CD8-positive, alpha-beta T cell (primary cell): ENCODE measurements at regions of chr7 and their contacts with region 1.

Region 1: DNA sequence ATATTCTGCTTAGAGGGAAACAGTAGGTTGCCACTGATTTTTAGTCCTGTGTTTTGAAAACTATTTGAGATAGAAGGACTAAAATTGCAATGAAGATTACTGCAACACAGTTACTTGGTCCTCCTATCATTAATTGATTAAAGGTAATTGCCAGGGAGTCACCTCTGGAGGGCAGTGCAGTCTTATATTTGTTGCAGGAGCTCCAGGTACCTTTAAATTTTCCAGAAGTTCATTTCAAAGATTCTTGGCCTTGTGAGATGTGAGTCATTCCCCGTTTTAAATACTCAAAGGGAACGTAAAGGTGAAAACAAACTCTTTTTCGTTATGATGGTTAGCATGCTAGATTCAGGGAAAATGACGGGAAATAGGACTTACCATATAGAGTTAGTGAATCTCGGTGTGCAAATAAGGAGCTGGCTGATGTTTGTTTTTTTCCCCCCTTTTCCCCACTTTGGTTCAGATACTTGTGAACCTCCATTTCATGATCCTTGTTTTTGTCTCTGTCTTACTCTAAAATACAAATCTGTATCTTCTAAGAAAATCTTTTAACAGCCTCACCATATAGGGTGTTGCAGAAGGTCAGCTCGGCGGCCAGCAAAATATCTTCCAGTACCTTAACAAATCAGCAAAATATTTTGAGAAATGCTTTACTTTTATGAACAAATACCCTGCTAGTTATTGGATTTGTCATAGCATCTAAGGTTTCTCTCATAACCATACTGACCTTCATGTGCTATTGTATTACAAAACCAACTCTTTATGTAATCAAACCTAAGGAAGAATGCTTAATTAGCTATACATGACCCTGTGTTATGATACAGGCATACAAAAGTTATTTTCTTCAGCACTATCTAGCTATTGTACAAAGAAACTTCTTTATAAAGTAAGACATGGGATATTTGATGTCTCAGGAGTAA is 143.0 kb upstream of the HDAC9 start:
- DNase-seq: peak in 3 of 9 experiments; percentile 4 to 51 (median 37)
- ATAC-seq: no peak
- H3K4me3 ChIP-seq: no peak overlapping the region
- H3K4me3 Mint-ChIP-seq: no peak overlapping the region
- H3K27ac ChIP-seq: no peak overlapping the region
- H3K27ac Mint-ChIP-seq: no peak overlapping the region
- H3K4me1 ChIP-seq: no peaks in the 10 kb centered on the region
- H3K4me1 Mint-ChIP-seq: peaks cover 8% of the 10 kb centered on the region
- H3K27me3 ChIP-seq: no peaks in the 10 kb centered on the region
- H3K27me3 Mint-ChIP-seq: no peaks in the 10 kb centered on the region
- CTCF ChIP-seq: no peak

Region 2: GRCh38 chr7:16982640-16983350 is 1369.8 kb before region 1 on chr7:
- CTCF ChIA-PET with region 1: no interaction called
- POLR2A ChIA-PET with region 1: no interaction called
- intact Hi-C with region 1: loop called (anchors 10 kb)
- DNase-seq: peak in 4 of 9 experiments; percentile 6 to 65 (median 36)
- ATAC-seq: peak; percentile 69
- H3K4me3 ChIP-seq: no peak overlapping the region
- H3K4me3 Mint-ChIP-seq: no peak overlapping the region
- H3K27ac ChIP-seq: no peak overlapping the region
- H3K27ac Mint-ChIP-seq: no peak overlapping the region
- H3K4me1 ChIP-seq: no peaks in the 10 kb centered on the region
- H3K4me1 Mint-ChIP-seq: peaks cover 2% of the 10 kb centered on the region
- H3K27me3 ChIP-seq: peaks cover 0 to 2% of the 10 kb centered on the region in 2 experiments
- H3K27me3 Mint-ChIP-seq: peaks cover 11% of the 10 kb centered on the region
- CTCF ChIP-seq: peak; percentile 99

Region 3: DNA sequence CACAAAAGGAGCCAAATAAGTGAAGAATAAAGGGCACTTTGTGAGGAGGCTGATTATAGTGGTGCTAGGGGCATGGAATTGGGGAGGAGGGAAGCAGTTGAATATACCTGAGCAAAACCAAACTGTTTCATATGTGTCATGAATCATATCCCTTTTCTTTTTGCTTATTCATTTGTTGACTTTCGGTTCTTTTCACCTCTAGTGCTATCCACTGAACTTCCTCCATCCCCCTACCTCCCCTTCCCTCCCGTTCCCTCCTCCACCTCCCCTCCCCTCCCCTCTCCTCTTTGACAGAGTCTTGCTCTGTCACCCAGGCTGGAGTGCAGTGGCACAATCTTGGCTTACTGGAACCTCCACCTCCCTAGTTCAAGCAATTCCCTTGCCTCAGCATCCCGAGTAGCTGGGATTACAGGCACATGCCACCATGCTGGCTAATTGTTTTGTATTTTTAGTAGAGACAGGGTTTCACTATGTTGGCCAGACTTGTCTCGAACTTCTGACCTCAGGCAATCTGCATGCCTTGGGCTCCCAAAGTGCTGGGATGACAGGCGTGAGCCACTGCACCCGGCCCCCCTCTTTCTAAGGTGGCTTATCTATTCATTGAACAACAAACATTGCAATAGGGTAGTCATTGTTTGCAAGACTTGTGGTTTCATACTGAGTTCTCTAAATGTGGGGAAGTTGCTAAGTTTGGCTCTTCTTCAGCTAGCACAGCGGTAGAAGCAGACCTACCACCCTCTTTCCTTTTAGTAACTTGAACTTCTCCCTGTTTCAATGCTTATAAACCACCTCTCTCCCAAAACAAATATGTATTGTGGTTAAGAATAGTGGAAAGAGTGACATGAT is 174.6 kb before region 1 on chr7:
- CTCF ChIA-PET with region 1: no interaction called
- POLR2A ChIA-PET with region 1: no interaction called
- intact Hi-C with region 1: no loop called
- DNase-seq: peak in 2 of 9 experiments; percentile 15 to 41
- ATAC-seq: peak; percentile 29
- H3K4me3 ChIP-seq: no peak overlapping the region
- H3K4me3 Mint-ChIP-seq: no peak overlapping the region
- H3K27ac ChIP-seq: no peak overlapping the region
- H3K27ac Mint-ChIP-seq: no peak overlapping the region
- H3K4me1 ChIP-seq: no peaks in the 10 kb centered on the region
- H3K4me1 Mint-ChIP-seq: no peaks in the 10 kb centered on the region
- H3K27me3 ChIP-seq: no peaks in the 10 kb centered on the region
- H3K27me3 Mint-ChIP-seq: peaks cover 5% of the 10 kb centered on the region
- CTCF ChIP-seq: no peak

Region 4: GRCh38 chr7:18570890-18571478 is 218.4 kb after region 1 on chr7:
- CTCF ChIA-PET with region 1: no interaction called
- POLR2A ChIA-PET with region 1: no interaction called
- intact Hi-C with region 1: no loop called
- DNase-seq: no peak
- ATAC-seq: no peak
- H3K4me3 ChIP-seq: no peak overlapping the region
- H3K4me3 Mint-ChIP-seq: no peak overlapping the region
- H3K27ac ChIP-seq: no peak overlapping the region
- H3K27ac Mint-ChIP-seq: no peak overlapping the region
- H3K4me1 ChIP-seq: no peaks in the 10 kb centered on the region
- H3K4me1 Mint-ChIP-seq: no peaks in the 10 kb centered on the region
- H3K27me3 ChIP-seq: no peaks in the 10 kb centered on the region
- H3K27me3 Mint-ChIP-seq: no peaks in the 10 kb centered on the region
- CTCF ChIP-seq: no peak

Region 5: DNA sequence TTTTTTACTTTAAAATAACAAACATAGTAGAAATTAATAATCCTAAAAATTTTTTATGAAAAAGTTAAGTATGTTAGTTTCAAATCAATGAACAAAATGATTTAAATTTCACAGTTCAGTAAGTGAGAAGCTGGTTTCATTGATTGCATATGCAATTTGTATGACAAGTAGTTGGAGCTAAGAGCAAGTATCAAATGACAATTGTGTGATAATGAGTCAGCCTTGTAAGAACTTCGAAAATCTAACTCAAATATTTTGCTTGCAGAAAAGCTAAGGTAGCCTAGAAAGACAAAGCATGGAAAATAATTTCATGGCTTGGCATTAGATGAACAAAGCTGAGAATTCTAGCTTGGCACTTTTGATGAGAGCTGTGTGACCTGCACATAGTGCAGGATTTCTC is 254.4 kb after region 1 on chr7:
- CTCF ChIA-PET with region 1: no interaction called
- POLR2A ChIA-PET with region 1: no interaction called
- intact Hi-C with region 1: no loop called
- DNase-seq: no peak
- ATAC-seq: no peak
- H3K4me3 ChIP-seq: no peak overlapping the region
- H3K4me3 Mint-ChIP-seq: no peak overlapping the region
- H3K27ac ChIP-seq: no peak overlapping the region
- H3K27ac Mint-ChIP-seq: no peak overlapping the region
- H3K4me1 ChIP-seq: no peaks in the 10 kb centered on the region
- H3K4me1 Mint-ChIP-seq: no peaks in the 10 kb centered on the region
- H3K27me3 ChIP-seq: no peaks in the 10 kb centered on the region
- H3K27me3 Mint-ChIP-seq: no peaks in the 10 kb centered on the region
- CTCF ChIP-seq: no peak

Region 6: DNA sequence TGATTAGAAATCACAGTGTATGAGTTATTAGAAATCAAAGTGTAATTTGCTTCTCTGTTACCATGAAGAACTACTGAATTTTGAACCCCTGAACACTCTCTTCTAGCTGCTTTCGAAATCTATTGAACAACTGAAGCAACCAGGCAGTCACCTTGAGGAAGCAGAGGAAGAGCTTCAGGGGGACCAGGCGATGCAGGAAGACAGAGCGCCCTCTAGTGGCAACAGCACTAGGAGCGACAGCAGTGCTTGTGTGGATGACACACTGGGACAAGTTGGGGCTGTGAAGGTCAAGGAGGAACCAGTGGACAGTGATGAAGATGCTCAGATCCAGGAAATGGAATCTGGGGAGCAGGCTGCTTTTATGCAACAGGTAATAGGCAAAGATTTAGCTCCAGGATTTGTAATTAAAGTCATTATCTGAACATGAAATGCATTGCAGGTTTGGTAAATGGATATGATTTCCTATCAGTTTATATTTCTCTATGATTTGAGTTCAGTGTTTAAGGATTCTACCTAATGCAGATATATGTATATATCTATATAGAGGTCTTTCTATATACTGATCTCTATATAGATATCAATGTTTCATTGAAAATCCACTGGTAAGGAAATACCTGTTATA is 313.6 kb after region 1 on chr7:
- CTCF ChIA-PET with region 1: interaction called, 3 read pairs
- POLR2A ChIA-PET with region 1: no interaction called
- intact Hi-C with region 1: loop called (anchors 5 to 10 kb)
- DNase-seq: peak; percentile 13 to 76 (median 59)
- ATAC-seq: peak; percentile 46
- H3K4me3 ChIP-seq: no peak overlapping the region
- H3K4me3 Mint-ChIP-seq: no peak overlapping the region
- H3K27ac ChIP-seq: no peak overlapping the region
- H3K27ac Mint-ChIP-seq: no peak overlapping the region
- H3K4me1 ChIP-seq: no peaks in the 10 kb centered on the region
- H3K4me1 Mint-ChIP-seq: peaks cover 3% of the 10 kb centered on the region
- H3K27me3 ChIP-seq: no peaks in the 10 kb centered on the region
- H3K27me3 Mint-ChIP-seq: no peaks in the 10 kb centered on the region
- CTCF ChIP-seq: peak; percentile 79

Region 7: DNA sequence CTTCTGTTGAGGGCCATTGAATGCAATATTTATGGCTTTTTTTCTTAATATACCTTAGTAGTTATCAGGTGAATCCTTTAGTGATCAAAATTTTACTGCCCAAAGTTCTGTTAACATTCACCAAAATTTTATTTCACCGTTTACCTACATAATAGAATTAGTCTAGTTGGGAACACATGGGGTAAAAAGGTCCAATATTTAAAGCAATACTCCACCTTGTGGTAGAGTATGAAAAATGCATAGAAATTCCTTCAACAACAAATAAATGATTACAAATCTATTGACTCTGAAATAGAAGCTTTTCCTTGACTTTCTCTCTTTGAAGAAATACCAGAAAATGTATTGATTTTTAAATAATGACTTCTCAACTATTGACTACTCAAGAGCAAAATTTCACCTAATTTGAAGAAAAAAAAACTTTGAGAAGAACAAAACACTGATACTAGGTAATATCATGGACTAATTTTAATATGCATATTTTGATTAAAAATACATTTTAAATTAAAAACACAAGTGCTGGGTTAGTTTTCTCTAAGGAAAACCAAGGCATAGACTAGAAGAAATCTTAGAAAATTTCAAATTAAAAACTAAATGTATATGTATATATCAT is 1312.9 kb after region 1 on chr7:
- CTCF ChIA-PET with region 1: interaction called, 3 read pairs
- POLR2A ChIA-PET with region 1: no interaction called
- intact Hi-C with region 1: loop called (anchors 5 kb)
- DNase-seq: peak in 2 of 9 experiments; percentile 11 to 32
- ATAC-seq: no peak
- H3K4me3 ChIP-seq: no peak overlapping the region
- H3K4me3 Mint-ChIP-seq: no peak overlapping the region
- H3K27ac ChIP-seq: no peak overlapping the region
- H3K27ac Mint-ChIP-seq: no peak overlapping the region
- H3K4me1 ChIP-seq: no peaks in the 10 kb centered on the region
- H3K4me1 Mint-ChIP-seq: peaks cover 12% of the 10 kb centered on the region
- H3K27me3 ChIP-seq: no peaks in the 10 kb centered on the region
- H3K27me3 Mint-ChIP-seq: peaks cover 3% of the 10 kb centered on the region
- CTCF ChIP-seq: peak; percentile 75